A673 (cell line): ENCODE measurements at regions of chr5 and their contacts with region 1.

Region 1: DNA sequence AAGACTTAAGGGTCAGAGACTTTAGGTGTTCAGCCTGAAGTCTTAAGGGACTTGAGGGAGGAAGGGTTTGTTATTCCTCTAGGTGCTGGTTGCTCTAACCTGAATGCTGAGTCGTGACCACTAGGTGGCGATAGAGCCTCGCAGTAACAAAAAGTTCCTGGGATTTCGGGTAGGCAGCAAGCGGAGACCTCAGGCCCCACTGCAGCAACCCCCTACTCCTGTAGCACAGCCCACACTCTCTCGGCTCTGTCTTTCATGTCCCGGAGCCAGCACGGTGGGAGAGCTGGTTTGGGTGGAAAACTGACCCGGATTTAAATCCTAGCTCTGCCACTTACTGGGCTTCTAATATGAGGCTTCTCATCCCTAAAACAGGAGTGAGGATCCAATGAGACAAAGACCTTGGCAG is 100.3 kb upstream of the PANK3 start:
- DNase-seq: peak; percentile 70
- H3K4me3 ChIP-seq: no peak overlapping the region
- H3K27ac ChIP-seq: no peak overlapping the region
- H3K4me1 ChIP-seq: no peaks in the 10 kb centered on the region
- H3K27me3 ChIP-seq: no peaks in the 10 kb centered on the region
- CTCF ChIP-seq: peak; percentile 83

Region 2: DNA sequence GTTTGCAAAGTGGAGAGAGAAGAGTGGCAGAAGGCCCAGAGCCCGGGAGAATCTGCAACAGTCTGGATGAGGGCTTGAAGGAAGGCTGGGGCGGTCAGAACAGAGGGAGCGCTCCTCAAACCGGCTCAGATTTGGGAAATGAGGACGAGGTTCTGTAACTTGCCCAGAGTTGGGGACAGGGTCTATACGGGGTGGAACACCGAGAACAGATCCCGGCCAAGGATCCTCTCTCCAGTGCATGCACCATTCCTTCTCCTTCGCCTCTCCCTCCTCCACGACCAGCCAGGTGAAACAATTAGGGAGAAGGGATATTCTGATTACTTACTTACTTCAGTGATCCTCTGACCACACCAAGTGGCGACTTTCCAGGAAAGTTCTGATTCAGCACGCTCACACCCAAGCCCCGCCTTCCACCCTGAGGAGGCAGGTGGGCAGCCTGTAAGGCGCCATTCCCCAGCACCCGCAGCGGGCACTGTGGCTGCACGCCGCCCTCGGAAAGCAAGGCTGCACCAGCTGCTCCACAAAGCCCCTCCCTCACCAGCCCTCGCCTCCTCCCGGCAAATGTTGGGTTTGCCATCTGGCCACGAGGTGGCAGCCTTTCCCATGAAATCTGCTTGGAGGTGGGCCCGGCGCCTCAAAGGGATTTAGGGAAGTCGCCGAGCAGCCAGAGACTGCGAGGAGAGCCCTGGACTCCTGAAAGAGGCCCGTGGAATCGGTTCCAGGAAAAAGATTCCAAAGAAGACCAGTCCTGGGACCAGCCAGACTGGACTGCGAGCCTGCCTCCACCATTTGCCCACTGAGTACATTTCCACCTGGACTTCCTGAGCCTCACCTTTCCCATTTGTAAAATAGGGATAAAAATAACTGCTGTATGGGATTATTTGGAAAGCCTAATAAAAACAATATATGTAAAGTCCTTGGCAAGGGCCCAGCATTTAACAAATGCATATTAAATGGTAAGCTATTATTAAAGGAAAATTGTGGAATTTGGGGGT is 410.3 kb before region 1 on chr5:
- CTCF ChIA-PET with region 1: no interaction called
- POLR2A ChIA-PET with region 1: no interaction called
- intact Hi-C with region 1: loop called (anchors 5 kb)
- DNase-seq: peak; percentile 92
- H3K4me3 ChIP-seq: peak overlapping the region; percentile 30
- H3K27ac ChIP-seq: no peak overlapping the region
- H3K4me1 ChIP-seq: peaks cover 5% of the 10 kb centered on the region
- H3K27me3 ChIP-seq: no peaks in the 10 kb centered on the region
- CTCF ChIP-seq: peak; percentile 85

Region 3: GRCh38 chr5:168502563-168503237 is 176.8 kb before region 1 on chr5:
- CTCF ChIA-PET with region 1: no interaction called
- POLR2A ChIA-PET with region 1: no interaction called
- intact Hi-C with region 1: no loop called
- DNase-seq: no peak
- H3K4me3 ChIP-seq: no peak overlapping the region
- H3K27ac ChIP-seq: no peak overlapping the region
- H3K4me1 ChIP-seq: no peaks in the 10 kb centered on the region
- H3K27me3 ChIP-seq: no peaks in the 10 kb centered on the region
- CTCF ChIP-seq: no peak

Region 4: GRCh38 chr5:168765551-168766425 is 86.3 kb after region 1 on chr5:
- CTCF ChIA-PET with region 1: interaction called, 13 read pairs
- POLR2A ChIA-PET with region 1: no interaction called
- intact Hi-C with region 1: no loop called
- DNase-seq: peak; percentile 35
- H3K4me3 ChIP-seq: no peak overlapping the region
- H3K27ac ChIP-seq: no peak overlapping the region
- H3K4me1 ChIP-seq: no peaks in the 10 kb centered on the region
- H3K27me3 ChIP-seq: peaks cover 31% of the 10 kb centered on the region
- CTCF ChIP-seq: no peak

Region 5: GRCh38 chr5:168879929-168880328 is 200.4 kb after region 1 on chr5:
- CTCF ChIA-PET with region 1: no interaction called
- POLR2A ChIA-PET with region 1: no interaction called
- intact Hi-C with region 1: no loop called
- DNase-seq: peak; percentile 60
- H3K4me3 ChIP-seq: no peak overlapping the region
- H3K27ac ChIP-seq: no peak overlapping the region
- H3K4me1 ChIP-seq: no peaks in the 10 kb centered on the region
- H3K27me3 ChIP-seq: peaks cover 51% of the 10 kb centered on the region
- CTCF ChIP-seq: no peak

Region 6: GRCh38 chr5:170183816-170184687 is 1504.5 kb after region 1 on chr5:
- CTCF ChIA-PET with region 1: no interaction called
- POLR2A ChIA-PET with region 1: no interaction called
- intact Hi-C with region 1: loop called (anchors 10 kb)
- DNase-seq: peak; percentile 66
- H3K4me3 ChIP-seq: no peak overlapping the region
- H3K27ac ChIP-seq: no peak overlapping the region
- H3K4me1 ChIP-seq: no peaks in the 10 kb centered on the region
- H3K27me3 ChIP-seq: no peaks in the 10 kb centered on the region
- CTCF ChIP-seq: peak; percentile 84